SK-N-SH (cell line): ENCODE measurements at regions of chr11 and their contacts with region 1.

Region 1: GRCh38 chr11:66069715-66070603 is at the start of gene PACS1:
- DNase-seq: peak; percentile 94
- H3K4me3 ChIP-seq: peak within 1 kb of the TSS; percentile 83 to 85
- H3K27ac ChIP-seq: peak within 1 kb of the TSS; percentile 86 to 94
- H3K4me1 ChIP-seq: peaks cover 20 to 30% of the 10 kb centered on the region in 2 experiments; a peak in 3 of 4 replicates
- H3K27me3 ChIP-seq: no peaks in the 10 kb centered on the region
- CTCF ChIP-seq: no peak
- EP300 ChIP-seq: peak in 1 of 2 experiments; percentile 13; a peak in 1 of 4 replicates
- RAD21 ChIP-seq: no peak
- polyA plus RNA-seq, gene PACS1: 24.8 and 37.3 TPM in 2 replicates

Region 2: GRCh38 chr11:66045177-66045639 is 24.8 kb before region 1 on chr11:
- CTCF ChIA-PET with region 1: interaction called, 101 read pairs
- POLR2A ChIA-PET with region 1: no interaction called
- DNase-seq: peak; percentile 97
- H3K4me3 ChIP-seq: peak overlapping the region in 1 of 2 experiments; percentile 53; a peak in 1 of 4 replicates
- H3K27ac ChIP-seq: peak overlapping the region in 1 of 2 experiments; percentile 22; a peak in 1 of 4 replicates
- H3K4me1 ChIP-seq: peaks cover 6 to 32% of the 10 kb centered on the region in 2 experiments; a peak in 1 of 4 replicates
- H3K27me3 ChIP-seq: no peaks in the 10 kb centered on the region
- CTCF ChIP-seq: peak; percentile 86
- EP300 ChIP-seq: no peak
- RAD21 ChIP-seq: peak; percentile 45

Region 3: DNA sequence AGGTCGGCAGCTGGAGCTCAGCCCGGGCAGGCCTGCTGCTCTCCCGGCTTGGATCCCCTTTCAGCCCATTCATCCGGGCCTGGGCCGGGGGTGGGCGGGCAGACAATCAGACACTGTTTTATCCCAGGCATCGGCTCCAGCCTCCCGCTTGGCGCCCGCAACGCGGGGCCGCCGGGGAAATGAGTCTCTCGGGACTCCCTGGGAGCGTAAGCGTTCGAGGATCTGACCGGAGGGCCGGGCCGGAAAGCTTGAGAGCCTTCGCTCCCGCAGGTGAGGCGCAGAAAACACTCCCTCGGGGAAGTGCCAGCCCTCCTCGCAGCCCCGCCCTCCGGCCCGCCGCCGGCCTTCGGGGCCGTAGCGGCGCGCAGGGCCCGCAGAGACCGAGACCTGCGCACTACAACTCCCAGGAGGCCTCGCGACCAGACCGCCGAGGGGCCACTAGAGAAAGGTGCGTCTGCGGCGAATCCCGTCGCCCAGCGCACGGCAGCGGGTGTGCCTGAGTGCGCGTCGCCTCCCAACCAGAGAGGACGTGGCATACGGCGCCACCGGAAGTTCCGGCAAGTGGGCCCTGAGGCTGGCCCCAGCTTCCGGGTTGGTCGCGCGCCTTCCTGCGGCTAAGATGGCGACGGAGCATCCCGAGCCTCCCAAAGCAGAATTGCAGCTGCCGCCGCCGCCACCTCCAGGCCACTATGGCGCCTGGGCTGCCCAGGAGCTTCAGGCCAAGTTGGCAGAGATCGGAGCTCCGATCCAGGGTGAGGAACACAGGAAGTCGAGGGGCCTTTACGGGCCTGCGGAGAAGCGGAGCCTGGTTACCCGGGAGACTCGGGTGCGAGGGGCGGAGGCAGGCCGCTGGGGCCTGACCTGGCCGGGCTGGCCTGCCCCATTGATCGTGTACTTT is 17.9 kb before region 1 on chr11 and contains the start of gene SF3B2:
- CTCF ChIA-PET with region 1: interaction called, 101 read pairs
- POLR2A ChIA-PET with region 1: no interaction called
- DNase-seq: peak; percentile 96
- H3K4me3 ChIP-seq: peak within 1 kb of the TSS; percentile 90 to 99
- H3K27ac ChIP-seq: peak within 1 kb of the TSS; percentile 81 to 94
- H3K4me1 ChIP-seq: peaks cover 15 to 40% of the 10 kb centered on the region in 2 experiments; a peak in 2 of 4 replicates
- H3K27me3 ChIP-seq: no peaks in the 10 kb centered on the region
- CTCF ChIP-seq: no peak
- EP300 ChIP-seq: no peak; a peak in 1 of 4 replicates
- RAD21 ChIP-seq: no peak
- polyA plus RNA-seq, gene SF3B2: 90.9 and 128 TPM in 2 replicates

Region 4: DNA sequence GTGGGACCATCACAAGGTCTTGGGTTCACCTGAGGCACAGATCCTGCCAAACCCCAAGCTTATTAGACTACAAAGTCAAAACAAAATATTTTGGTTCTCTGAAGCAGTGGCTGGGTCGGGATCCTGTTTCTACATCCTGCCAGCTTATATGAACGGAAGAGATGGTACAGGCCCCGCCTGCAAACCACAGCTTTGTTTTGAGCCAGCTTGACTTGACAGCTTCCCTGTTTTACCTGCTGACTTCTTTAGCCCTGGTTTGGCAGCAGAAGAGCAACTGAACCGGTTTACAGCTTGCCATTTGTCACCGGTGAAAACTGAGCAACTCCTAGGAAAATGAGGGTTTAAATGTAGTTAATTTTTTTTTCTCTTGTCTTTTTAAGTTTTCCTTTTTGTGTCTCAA is 11.5 kb after region 1 on chr11:
- CTCF ChIA-PET with region 1: interaction called, 71 read pairs
- POLR2A ChIA-PET with region 1: no interaction called
- DNase-seq: no peak
- H3K4me3 ChIP-seq: no peak overlapping the region
- H3K27ac ChIP-seq: peak overlapping the region; percentile 58 to 80
- H3K4me1 ChIP-seq: peaks cover 47 to 51% of the 10 kb centered on the region in 2 experiments
- H3K27me3 ChIP-seq: no peaks in the 10 kb centered on the region
- CTCF ChIP-seq: no peak
- EP300 ChIP-seq: no peak
- RAD21 ChIP-seq: no peak

Region 5: GRCh38 chr11:66119348-66120133 is 49.6 kb after region 1 on chr11:
- CTCF ChIA-PET with region 1: interaction called, 14 read pairs
- POLR2A ChIA-PET with region 1: no interaction called
- DNase-seq: peak; percentile 61
- H3K4me3 ChIP-seq: no peak overlapping the region; a peak in 1 of 4 replicates
- H3K27ac ChIP-seq: peak overlapping the region; percentile 98 to 99
- H3K4me1 ChIP-seq: peaks cover 49 to 66% of the 10 kb centered on the region in 2 experiments
- H3K27me3 ChIP-seq: no peaks in the 10 kb centered on the region
- CTCF ChIP-seq: no peak
- EP300 ChIP-seq: peak; percentile 78 to 86
- RAD21 ChIP-seq: no peak

Region 6: GRCh38 chr11:66136752-66137123 is 66.8 kb after region 1 on chr11:
- CTCF ChIA-PET with region 1: interaction called, 74 read pairs
- POLR2A ChIA-PET with region 1: no interaction called
- DNase-seq: no peak
- H3K4me3 ChIP-seq: no peak overlapping the region
- H3K27ac ChIP-seq: peak overlapping the region in 1 of 2 experiments; percentile 68; a peak in 2 of 4 replicates
- H3K4me1 ChIP-seq: peaks cover 20 to 28% of the 10 kb centered on the region in 2 experiments; a peak in 2 of 4 replicates
- H3K27me3 ChIP-seq: no peaks in the 10 kb centered on the region
- CTCF ChIP-seq: no peak
- EP300 ChIP-seq: no peak
- RAD21 ChIP-seq: no peak